Activated naive CD4-positive, alpha-beta T cell treated with anti-CD3 and anti-CD28 coated beads for 36 hours (primary cell): ENCODE measurements at regions of chr11 and their contacts with region 1.

Region 1: DNA sequence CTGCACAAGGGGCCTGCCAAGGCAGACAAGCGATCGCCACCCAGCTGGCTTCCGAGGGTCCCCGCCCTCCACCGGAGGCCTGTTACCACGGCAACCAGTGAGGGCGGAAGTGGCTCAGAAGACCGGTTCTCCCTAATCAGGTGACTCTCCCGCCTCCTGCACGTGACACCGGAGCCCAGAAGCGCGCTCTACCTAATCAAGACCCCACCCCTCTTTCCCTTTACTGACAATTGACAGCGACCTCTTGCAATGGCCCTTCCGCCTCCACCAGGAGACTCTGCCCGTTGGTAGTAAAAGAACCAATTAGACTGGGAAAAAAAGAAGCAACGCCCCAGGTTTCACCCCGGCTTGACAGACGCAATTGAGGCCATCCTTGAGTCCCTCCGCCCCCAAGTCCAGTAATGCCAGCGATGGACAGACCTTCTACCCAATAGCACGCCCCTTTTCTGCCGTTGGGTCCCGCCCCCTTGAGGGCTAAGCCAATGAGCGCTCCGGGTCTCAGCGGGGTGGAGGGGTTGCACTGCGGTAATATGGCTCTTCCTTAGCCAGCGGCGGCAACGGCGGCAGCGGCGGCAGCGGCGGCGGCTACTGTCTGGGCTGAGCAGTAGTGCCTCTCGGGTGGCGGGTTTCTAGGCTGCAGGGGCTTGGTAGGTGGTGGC is at the start of gene UVRAG:
- DNase-seq: peak; percentile 99
- H3K4me3 Mint-ChIP-seq: no peak within 1 kb of the TSS
- H3K27ac Mint-ChIP-seq: peak within 1 kb of the TSS; percentile 90
- H3K4me1 Mint-ChIP-seq: peaks cover 19% of the 10 kb centered on the region
- H3K27me3 Mint-ChIP-seq: no peaks in the 10 kb centered on the region
- total RNA-seq, gene UVRAG: 15.9 to 18.3 TPM

Region 2: DNA sequence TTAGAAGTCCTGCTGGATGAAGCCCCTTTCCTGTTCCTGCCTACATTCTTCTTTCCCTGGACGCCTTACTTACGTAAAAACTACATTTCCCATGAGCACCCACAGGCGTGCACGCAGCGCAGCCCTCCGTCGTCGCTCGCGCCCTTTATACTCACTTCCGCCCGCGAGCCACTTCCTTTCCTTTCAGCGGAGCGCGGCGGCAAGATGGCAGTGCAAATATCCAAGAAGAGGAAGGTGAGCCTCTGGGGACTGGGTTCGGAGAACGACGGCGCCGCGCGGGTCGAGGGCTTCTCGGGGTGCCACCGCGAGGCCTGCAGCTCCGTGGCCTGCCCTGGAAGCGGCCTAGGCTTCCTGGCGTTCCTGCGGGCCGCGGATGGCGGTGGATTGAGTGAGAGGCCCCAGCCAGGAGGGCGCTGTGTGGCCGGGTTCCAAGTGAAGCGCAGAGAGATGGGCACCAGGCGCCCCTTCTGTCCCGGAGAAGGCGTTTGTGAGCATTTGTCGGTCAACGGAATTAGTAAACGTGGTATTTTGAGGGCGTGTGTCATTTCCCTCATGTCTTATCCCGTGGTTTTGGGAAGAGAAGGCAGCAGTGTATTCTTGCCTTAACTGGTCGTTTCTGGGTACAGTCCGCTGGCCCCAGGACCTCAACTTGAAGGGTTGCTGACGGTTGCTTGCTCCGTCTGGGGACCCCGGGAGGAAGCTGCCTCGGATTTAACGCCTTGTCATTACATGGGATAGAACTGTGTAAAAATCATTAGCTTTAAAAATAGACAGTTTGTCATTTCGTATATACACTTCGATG is 415.3 kb before region 1 on chr11 and contains the start of gene RPS3:
- CTCF ChIA-PET with region 1: no interaction called
- intact Hi-C with region 1: loop called (anchors 10 kb)
- DNase-seq: peak; percentile 90
- H3K4me3 Mint-ChIP-seq: peak within 1 kb of the TSS; percentile 92
- H3K27ac Mint-ChIP-seq: peak within 1 kb of the TSS; percentile 92
- H3K4me1 Mint-ChIP-seq: peaks cover 44% of the 10 kb centered on the region
- H3K27me3 Mint-ChIP-seq: no peaks in the 10 kb centered on the region
- total RNA-seq, gene RPS3: 5,069 to 5,116 TPM

Region 3: DNA sequence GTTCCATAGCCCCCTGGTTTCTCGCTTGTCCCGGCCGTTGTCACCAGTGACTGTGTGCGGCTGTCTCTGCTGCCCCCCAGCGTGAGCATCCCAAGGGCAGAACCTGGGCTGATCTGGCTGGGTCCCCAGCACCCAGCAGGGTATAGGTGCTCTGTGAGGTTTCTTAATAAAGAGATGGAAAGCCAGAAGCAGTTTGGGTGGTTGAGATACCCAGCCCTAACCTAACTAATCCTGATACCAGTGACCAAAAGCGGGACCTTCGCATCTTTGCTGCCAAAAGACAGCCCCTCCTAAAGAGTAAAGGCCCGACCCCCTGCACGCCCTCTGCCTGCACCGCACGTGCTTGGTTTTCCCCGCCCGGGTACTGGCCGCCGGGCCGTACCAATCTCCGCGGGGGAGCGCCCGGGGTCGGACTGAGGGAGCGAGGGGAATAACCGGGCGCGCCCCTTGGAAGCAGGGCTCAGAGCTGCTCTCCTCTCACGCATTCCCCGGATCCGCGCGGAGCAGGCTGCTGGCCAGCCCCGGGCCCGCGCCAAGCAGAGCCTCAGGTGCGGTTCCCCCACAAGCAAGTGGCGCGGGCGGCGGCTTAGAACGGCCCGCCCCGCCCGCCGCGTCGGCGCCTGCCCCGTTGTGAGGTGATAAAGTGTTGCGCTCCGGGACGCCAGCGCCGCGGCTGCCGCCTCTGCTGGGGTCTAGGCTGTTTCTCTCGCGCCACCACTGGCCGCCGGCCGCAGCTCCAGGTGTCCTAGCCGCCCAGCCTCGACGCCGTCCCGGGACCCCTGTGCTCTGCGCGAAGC is 46.5 kb before region 1 on chr11 and contains the start of gene DGAT2:
- CTCF ChIA-PET with region 1: no interaction called
- intact Hi-C with region 1: loop called (anchors 1 kb)
- DNase-seq: peak; percentile 77
- H3K4me3 Mint-ChIP-seq: peak within 1 kb of the TSS; percentile 64
- H3K27ac Mint-ChIP-seq: no peak within 1 kb of the TSS
- H3K4me1 Mint-ChIP-seq: peaks cover 24% of the 10 kb centered on the region
- H3K27me3 Mint-ChIP-seq: peaks cover 4% of the 10 kb centered on the region
- total RNA-seq, gene DGAT2: 3.4 to 4.2 TPM

Region 4: GRCh38 chr11:75802913-75803820 is 11.6 kb before region 1 on chr11:
- CTCF ChIA-PET with region 1: interaction called, 12 read pairs
- intact Hi-C with region 1: no loop called
- DNase-seq: peak; percentile 85
- H3K4me3 Mint-ChIP-seq: no peak overlapping the region
- H3K27ac Mint-ChIP-seq: no peak overlapping the region
- H3K4me1 Mint-ChIP-seq: peaks cover 12% of the 10 kb centered on the region
- H3K27me3 Mint-ChIP-seq: no peaks in the 10 kb centered on the region

Region 5: GRCh38 chr11:76235233-76236091 is 420.6 kb after region 1 on chr11:
- CTCF ChIA-PET with region 1: no interaction called
- intact Hi-C with region 1: loop called (anchors 1 kb)
- DNase-seq: peak; percentile 96
- H3K4me3 Mint-ChIP-seq: peak overlapping the region; percentile 84
- H3K27ac Mint-ChIP-seq: peak overlapping the region; percentile 93
- H3K4me1 Mint-ChIP-seq: peaks cover 44% of the 10 kb centered on the region
- H3K27me3 Mint-ChIP-seq: peaks cover 3% of the 10 kb centered on the region

Region 6: GRCh38 chr11:76444384-76445123 is 629.7 kb after region 1 on chr11 and contains the start of gene EMSY:
- CTCF ChIA-PET with region 1: no interaction called
- intact Hi-C with region 1: loop called (anchors 1 kb)
- DNase-seq: peak; percentile 95
- H3K4me3 Mint-ChIP-seq: peak within 1 kb of the TSS; percentile 95
- H3K27ac Mint-ChIP-seq: peak within 1 kb of the TSS; percentile 96
- H3K4me1 Mint-ChIP-seq: peaks cover 32% of the 10 kb centered on the region
- H3K27me3 Mint-ChIP-seq: no peaks in the 10 kb centered on the region
- total RNA-seq, gene EMSY: 23.2 to 26.7 TPM